Naive thymus-derived CD4-positive, alpha-beta T cell (primary cell): ENCODE measurements at regions of chr3 and their contacts with region 1.

Region 1: GRCh38 chr3:32177702-32178198 is 60.7 kb upstream of the CMTM8 start:
- DNase-seq: peak in 8 of 9 donors; percentile 15 to 45 (median 36)
- ATAC-seq: peak; percentile 85
- H3K4me3 ChIP-seq: no peak overlapping the region
- H3K4me3 Mint-ChIP-seq: peak overlapping the region in 9 of 10 donors; percentile 37 to 78 (median 53)
- H3K27ac ChIP-seq: no peak overlapping the region
- H3K27ac Mint-ChIP-seq: peak overlapping the region in 4 of 9 donors; percentile 11 to 83 (median 50)
- H3K4me1 ChIP-seq: peaks cover 0 to 6% of the 10 kb centered on the region in 2 donors
- H3K4me1 Mint-ChIP-seq: peaks cover 8 to 16% (median 14%) of the 10 kb centered on the region in 7 donors
- H3K27me3 ChIP-seq: no peaks in the 10 kb centered on the region
- H3K27me3 Mint-ChIP-seq: peaks cover 0 to 15% (median 0%) of the 10 kb centered on the region in 5 donors

Region 2: GRCh38 chr3:32226870-32227500 is 49.2 kb after region 1 on chr3:
- CTCF ChIA-PET with region 1: no interaction called
- POLR2A ChIA-PET with region 1: no interaction called
- intact Hi-C with region 1: no loop called
- DNase-seq: no peak
- ATAC-seq: no peak
- H3K4me3 ChIP-seq: no peak overlapping the region
- H3K4me3 Mint-ChIP-seq: no peak overlapping the region
- H3K27ac ChIP-seq: no peak overlapping the region
- H3K27ac Mint-ChIP-seq: no peak overlapping the region
- H3K4me1 ChIP-seq: no peaks in the 10 kb centered on the region
- H3K4me1 Mint-ChIP-seq: peaks cover 0 to 5% (median 2%) of the 10 kb centered on the region in 7 donors
- H3K27me3 ChIP-seq: no peaks in the 10 kb centered on the region
- H3K27me3 Mint-ChIP-seq: peaks cover 0 to 12% (median 0%) of the 10 kb centered on the region in 5 donors

Region 3: GRCh38 chr3:32238453-32239306 is 60.9 kb after region 1 on chr3 and contains the start of gene CMTM8:
- CTCF ChIA-PET with region 1: interaction called, 29 read pairs
- POLR2A ChIA-PET with region 1: no interaction called
- intact Hi-C with region 1: loop called (anchors 1 to 2 kb)
- DNase-seq: peak; percentile 46 to 70 (median 67)
- ATAC-seq: peak; percentile 89
- H3K4me3 ChIP-seq: peak within 1 kb of the TSS; percentile 81
- H3K4me3 Mint-ChIP-seq: peak within 1 kb of the TSS; percentile 88 to 93 (median 90)
- H3K27ac ChIP-seq: peak within 1 kb of the TSS; percentile 64
- H3K27ac Mint-ChIP-seq: peak within 1 kb of the TSS; percentile 58 to 82 (median 74)
- H3K4me1 ChIP-seq: peaks cover 13 to 17% of the 10 kb centered on the region in 2 donors
- H3K4me1 Mint-ChIP-seq: peaks cover 37 to 58% (median 50%) of the 10 kb centered on the region in 7 donors
- H3K27me3 ChIP-seq: no peaks in the 10 kb centered on the region
- H3K27me3 Mint-ChIP-seq: peaks cover 0 to 25% (median 0%) of the 10 kb centered on the region in 5 donors
- total RNA-seq, gene CMTM8: 7.4 to 13.6 (median 8.6) TPM

Region 4: GRCh38 chr3:32334675-32335074 is 156.9 kb after region 1 on chr3:
- CTCF ChIA-PET with region 1: interaction called, 42 read pairs
- POLR2A ChIA-PET with region 1: no interaction called
- intact Hi-C with region 1: loop called (anchors 1 kb)
- DNase-seq: peak; percentile 15 to 72 (median 65)
- ATAC-seq: peak; percentile 83
- H3K4me3 ChIP-seq: no peak overlapping the region
- H3K4me3 Mint-ChIP-seq: peak overlapping the region; percentile 5 to 87 (median 66)
- H3K27ac ChIP-seq: peak overlapping the region; percentile 49
- H3K27ac Mint-ChIP-seq: peak overlapping the region; percentile 78 to 96 (median 92)
- H3K4me1 ChIP-seq: peaks cover 0 to 32% of the 10 kb centered on the region in 2 donors
- H3K4me1 Mint-ChIP-seq: peaks cover 39 to 67% (median 60%) of the 10 kb centered on the region in 7 donors
- H3K27me3 ChIP-seq: no peaks in the 10 kb centered on the region
- H3K27me3 Mint-ChIP-seq: no peaks in the 10 kb centered on the region

Region 5: DNA sequence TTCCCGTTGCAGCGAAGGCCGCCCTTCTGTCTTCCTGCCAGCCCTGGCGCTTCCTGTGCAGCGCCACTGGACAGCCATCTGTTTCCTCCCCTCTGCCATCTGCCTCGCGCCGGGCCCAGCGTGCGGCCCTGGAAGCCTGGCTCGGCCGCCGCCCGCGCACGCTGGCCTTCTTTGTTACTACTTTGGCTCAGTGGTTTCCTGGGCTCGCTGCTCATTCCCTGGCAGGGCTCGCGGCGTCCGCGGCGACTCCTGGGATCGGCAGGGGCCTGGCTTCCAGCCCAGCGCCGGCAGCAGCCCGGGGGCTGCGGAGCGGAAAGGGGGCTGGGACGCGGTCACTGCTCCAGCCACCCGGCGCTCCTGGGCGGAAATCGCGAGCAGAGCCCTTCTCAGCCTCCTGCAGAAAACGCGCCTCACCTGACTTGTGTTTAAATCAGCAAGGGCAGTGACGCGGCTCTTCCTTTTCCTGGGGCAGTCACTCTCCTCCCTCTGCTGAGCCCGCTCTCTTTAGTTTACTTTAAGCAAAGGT is 223.9 kb after region 1 on chr3:
- CTCF ChIA-PET with region 1: interaction called, 12 read pairs
- POLR2A ChIA-PET with region 1: no interaction called
- intact Hi-C with region 1: loop called (anchors 1 kb)
- DNase-seq: peak in 8 of 9 donors; percentile 45 to 71 (median 64)
- ATAC-seq: peak; percentile 76
- H3K4me3 ChIP-seq: peak overlapping the region; percentile 63
- H3K4me3 Mint-ChIP-seq: peak overlapping the region; percentile 83 to 96 (median 92)
- H3K27ac ChIP-seq: peak overlapping the region; percentile 87
- H3K27ac Mint-ChIP-seq: peak overlapping the region; percentile 92 to 100 (median 99)
- H3K4me1 ChIP-seq: peaks cover 30 to 44% of the 10 kb centered on the region in 2 donors
- H3K4me1 Mint-ChIP-seq: peaks cover 46 to 95% (median 78%) of the 10 kb centered on the region in 7 donors
- H3K27me3 ChIP-seq: no peaks in the 10 kb centered on the region
- H3K27me3 Mint-ChIP-seq: no peaks in the 10 kb centered on the region

Region 6: DNA sequence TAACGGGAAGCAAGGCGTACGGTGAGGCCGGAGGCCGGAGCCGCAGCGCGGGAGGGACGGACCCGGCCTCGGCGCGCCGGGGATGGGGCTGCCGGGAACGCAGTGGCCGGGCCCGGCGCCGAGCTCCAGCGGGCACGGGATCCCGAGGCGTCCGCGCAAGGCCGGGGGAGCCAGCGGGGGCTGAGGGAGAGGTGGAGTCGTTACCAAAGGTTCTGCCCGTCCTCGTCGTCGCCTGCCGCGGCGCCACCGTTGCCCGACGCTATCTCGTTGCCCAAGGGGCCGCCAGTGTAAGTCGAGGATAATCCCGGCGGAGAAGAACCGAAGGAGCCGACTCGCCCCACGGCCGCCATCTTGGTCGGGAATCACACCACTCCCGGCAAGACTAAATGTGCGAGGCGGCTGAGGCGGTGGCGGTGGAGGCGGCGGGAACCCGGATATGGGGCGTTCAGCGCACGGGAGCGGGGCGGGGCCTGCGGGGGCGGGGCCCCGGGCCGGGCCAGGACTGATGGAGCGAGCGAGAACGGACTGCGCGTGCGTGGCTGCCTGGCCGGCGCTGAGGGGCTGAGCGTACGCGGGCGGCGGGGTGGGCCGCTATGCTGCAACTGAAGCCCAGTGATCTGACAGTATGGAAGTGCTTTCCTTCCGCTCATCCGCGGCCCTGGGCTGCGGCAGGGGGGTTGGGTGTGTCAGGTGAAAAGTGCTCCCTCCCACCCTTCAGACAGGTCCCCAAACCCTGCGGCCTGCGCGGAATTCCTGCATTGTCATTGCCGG is 392.9 kb after region 1 on chr3 and contains the start of gene DYNC1LI1:
- CTCF ChIA-PET with region 1: no interaction called
- POLR2A ChIA-PET with region 1: no interaction called
- intact Hi-C with region 1: loop called in 1 of 2 experiments (anchors 5 kb)
- DNase-seq: peak; percentile 81 to 96 (median 88)
- ATAC-seq: peak; percentile 98
- H3K4me3 ChIP-seq: peak within 1 kb of the TSS; percentile 68
- H3K4me3 Mint-ChIP-seq: peak within 1 kb of the TSS; percentile 84 to 96 (median 92)
- H3K27ac ChIP-seq: peak within 1 kb of the TSS; percentile 90
- H3K27ac Mint-ChIP-seq: peak within 1 kb of the TSS; percentile 71 to 93 (median 86)
- H3K4me1 ChIP-seq: peaks cover 5 to 17% of the 10 kb centered on the region in 2 donors
- H3K4me1 Mint-ChIP-seq: peaks cover 0 to 39% (median 31%) of the 10 kb centered on the region in 7 donors
- H3K27me3 ChIP-seq: no peaks in the 10 kb centered on the region
- H3K27me3 Mint-ChIP-seq: no peaks in the 10 kb centered on the region
- total RNA-seq, gene DYNC1LI1: 26.1 to 28.5 (median 27.5) TPM

Region 7: DNA sequence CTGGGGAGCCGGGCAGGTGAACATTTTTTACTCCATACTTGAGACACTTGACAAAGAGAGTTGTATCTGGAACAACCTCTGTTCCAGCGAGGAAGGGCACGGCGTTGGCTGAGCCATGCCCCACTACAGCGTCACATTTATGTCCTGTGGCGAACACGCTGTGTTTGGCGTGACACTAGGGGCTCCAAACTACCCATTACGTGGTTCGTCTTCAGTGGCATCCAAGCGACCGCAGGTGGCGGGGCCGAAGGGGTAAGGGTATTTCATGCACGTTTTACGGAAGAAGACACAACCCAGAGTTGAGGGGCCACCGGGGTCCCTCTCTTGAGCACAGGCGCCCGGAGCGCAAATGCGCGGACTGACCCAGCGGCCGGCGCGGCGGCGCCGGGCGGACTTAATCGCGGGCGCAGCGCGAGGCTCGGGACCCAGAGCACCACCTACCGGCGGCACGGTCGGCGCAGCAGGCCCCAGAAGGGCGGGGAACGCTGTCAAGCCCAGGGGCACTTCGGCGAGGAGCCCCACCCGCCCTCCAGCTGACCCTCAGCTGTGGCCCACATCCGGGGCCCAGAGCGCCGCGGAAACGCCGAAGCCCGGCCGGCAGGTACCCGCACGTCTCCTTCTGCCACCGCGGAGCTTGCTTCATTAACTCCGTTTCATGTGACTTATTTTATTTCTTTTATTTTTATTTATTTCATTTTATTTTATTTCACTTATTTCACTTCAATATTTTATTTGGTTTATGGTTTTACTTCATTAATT is 603.6 kb after region 1 on chr3:
- CTCF ChIA-PET with region 1: no interaction called
- POLR2A ChIA-PET with region 1: no interaction called
- intact Hi-C with region 1: loop called in 1 of 2 experiments (anchors 10 kb)
- DNase-seq: peak in 8 of 9 donors; percentile 11 to 80 (median 44)
- ATAC-seq: peak; percentile 93
- H3K4me3 ChIP-seq: peak overlapping the region; percentile 62
- H3K4me3 Mint-ChIP-seq: peak overlapping the region; percentile 86 to 97 (median 91)
- H3K27ac ChIP-seq: no peak overlapping the region
- H3K27ac Mint-ChIP-seq: peak overlapping the region in 3 of 9 donors; percentile 30 to 59 (median 32)
- H3K4me1 ChIP-seq: peaks cover 0 to 7% of the 10 kb centered on the region in 2 donors
- H3K4me1 Mint-ChIP-seq: peaks cover 0 to 9% (median 4%) of the 10 kb centered on the region in 7 donors
- H3K27me3 ChIP-seq: peaks cover 0 to 4% of the 10 kb centered on the region in 2 donors
- H3K27me3 Mint-ChIP-seq: peaks cover 6 to 18% (median 10%) of the 10 kb centered on the region in 5 donors